ENCODE measurements at regions of chr10 and their contacts with region 1.

Region 1: DNA sequence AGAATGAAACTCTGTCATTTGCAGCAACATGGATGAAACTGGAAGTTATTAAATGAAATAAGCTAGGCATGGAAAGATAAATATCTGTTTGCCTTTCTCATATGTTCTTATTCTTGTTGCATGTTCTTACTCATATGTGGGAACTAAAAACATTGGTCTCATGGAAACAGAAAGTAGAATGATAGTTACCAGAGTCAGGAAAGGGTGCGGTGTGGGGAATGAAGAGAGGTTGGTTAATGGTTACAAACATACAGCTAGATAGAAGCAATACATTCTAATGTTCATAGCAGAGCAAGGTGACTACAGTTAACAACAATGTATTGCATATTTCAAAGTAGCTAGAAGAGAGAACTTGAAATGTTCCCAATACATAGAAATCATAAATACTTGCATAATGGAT is 105.1 kb downstream of the FAM107B start:
- DNase-seq: no peak
- ATAC-seq: no peak
- H3K4me3 ChIP-seq: no peak overlapping the region
- H3K27ac ChIP-seq: no peak overlapping the region
- H3K4me1 ChIP-seq: no peaks in the 10 kb centered on the region
- H3K27me3 ChIP-seq: peaks cover 0 to 3% of the 10 kb centered on the region in 2 experiments; a peak in 1 of 4 replicates
- CTCF ChIP-seq: no peak
- EP300 ChIP-seq: no peak
- POLR2A ChIP-seq: no peak
- RAD21 ChIP-seq: no peak

Region 2: DNA sequence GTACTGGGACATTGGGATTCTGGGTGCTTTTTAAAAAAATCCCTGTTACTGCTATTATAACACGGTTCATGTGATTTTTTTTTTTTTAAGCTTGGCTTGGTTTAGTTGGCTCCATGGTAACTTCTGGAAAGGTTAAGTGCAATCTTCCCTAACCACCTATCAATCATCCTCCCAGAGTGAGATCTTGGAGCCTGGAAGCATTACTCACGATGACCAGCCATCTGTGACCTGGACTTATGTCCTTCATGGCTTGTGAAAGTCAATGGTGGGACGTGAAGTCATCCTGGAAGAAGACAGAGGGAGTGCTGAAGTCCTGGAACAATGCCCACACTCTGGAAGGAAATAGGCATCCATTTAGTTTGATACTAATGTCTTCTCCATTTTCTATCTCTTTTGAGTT is 203.3 kb before region 1 on chr10:
- CTCF ChIA-PET with region 1: no interaction called
- POLR2A ChIA-PET with region 1: no interaction called
- RAD21 ChIA-PET with region 1: no interaction called
- SMC1A ChIA-PET with region 1: no interaction called
- in situ Hi-C with region 1: no loop called
- intact Hi-C with region 1: no loop called
- DNase-seq: no peak
- ATAC-seq: no peak
- H3K4me3 ChIP-seq: no peak overlapping the region
- H3K27ac ChIP-seq: no peak overlapping the region
- H3K4me1 ChIP-seq: no peaks in the 10 kb centered on the region
- H3K27me3 ChIP-seq: no peaks in the 10 kb centered on the region
- CTCF ChIP-seq: no peak
- EP300 ChIP-seq: no peak
- POLR2A ChIP-seq: no peak
- RAD21 ChIP-seq: no peak

Region 3: DNA sequence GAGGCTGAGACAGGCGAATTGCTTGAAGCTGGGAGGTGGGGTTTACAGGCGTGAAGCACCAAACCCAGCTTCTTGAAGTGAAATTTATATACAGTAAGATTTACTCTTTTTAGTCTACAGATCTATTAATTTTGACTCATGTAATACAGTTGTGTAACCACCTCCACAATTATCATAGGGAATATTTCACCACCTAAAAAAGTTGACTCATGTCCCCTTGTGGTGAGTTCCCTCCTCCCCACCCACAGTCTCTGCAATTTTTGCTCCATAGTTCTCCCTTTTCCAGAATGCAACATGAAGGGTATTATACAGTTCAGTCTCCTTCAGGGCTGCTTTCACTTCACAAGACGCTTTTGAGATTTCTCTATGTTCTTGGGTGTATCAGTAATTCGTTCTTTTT is 51.7 kb before region 1 on chr10:
- CTCF ChIA-PET with region 1: no interaction called
- POLR2A ChIA-PET with region 1: interaction called, 10 read pairs
- RAD21 ChIA-PET with region 1: no interaction called
- SMC1A ChIA-PET with region 1: interaction called, 3 read pairs
- in situ Hi-C with region 1: no loop called
- intact Hi-C with region 1: no loop called
- DNase-seq: no peak
- ATAC-seq: no peak
- H3K4me3 ChIP-seq: no peak overlapping the region
- H3K27ac ChIP-seq: no peak overlapping the region
- H3K4me1 ChIP-seq: no peaks in the 10 kb centered on the region
- H3K27me3 ChIP-seq: no peaks in the 10 kb centered on the region
- CTCF ChIP-seq: no peak
- EP300 ChIP-seq: no peak
- POLR2A ChIP-seq: no peak
- RAD21 ChIP-seq: no peak

Region 4: GRCh38 chr10:14761372-14761771 is 91.8 kb after region 1 on chr10:
- CTCF ChIA-PET with region 1: no interaction called
- POLR2A ChIA-PET with region 1: no interaction called
- RAD21 ChIA-PET with region 1: no interaction called
- SMC1A ChIA-PET with region 1: no interaction called
- in situ Hi-C with region 1: no loop called
- intact Hi-C with region 1: no loop called
- DNase-seq: no peak
- ATAC-seq: peak; percentile 68
- H3K4me3 ChIP-seq: no peak overlapping the region
- H3K27ac ChIP-seq: no peak overlapping the region
- H3K4me1 ChIP-seq: no peaks in the 10 kb centered on the region
- H3K27me3 ChIP-seq: no peaks in the 10 kb centered on the region
- CTCF ChIP-seq: no peak
- EP300 ChIP-seq: no peak
- POLR2A ChIP-seq: no peak
- RAD21 ChIP-seq: no peak

Measured in GM12878 (cell line).